Activated T-helper 1 cell treated with anti-CD3 and anti-CD28 coated beads, Interleukin-12 subunit alpha, Interleukin-12 subunit beta, Interleukin-2, Interleukin-4 antibody, amounts not matched to agents 30 ng/mL and 10 ng/mL and 1 ng/mL, durations not matched to agents 14 hours and 24 hours and 36 hours (primary cell): ENCODE measurements at regions of chr10 and their contacts with region 1.

Region 1: GRCh38 chr10:62804356-62805230 is at the start of gene ADO:
- DNase-seq: peak; percentile 68
- H3K4me3 Mint-ChIP-seq: peak within 1 kb of the TSS; percentile 90
- H3K27ac Mint-ChIP-seq: peak within 1 kb of the TSS; percentile 95
- H3K4me1 Mint-ChIP-seq: peaks cover 41% of the 10 kb centered on the region
- H3K27me3 Mint-ChIP-seq: peaks cover 11% of the 10 kb centered on the region
- total RNA-seq, gene ADO: 52.3 and 55.8 TPM in 2 replicates

Region 2: DNA sequence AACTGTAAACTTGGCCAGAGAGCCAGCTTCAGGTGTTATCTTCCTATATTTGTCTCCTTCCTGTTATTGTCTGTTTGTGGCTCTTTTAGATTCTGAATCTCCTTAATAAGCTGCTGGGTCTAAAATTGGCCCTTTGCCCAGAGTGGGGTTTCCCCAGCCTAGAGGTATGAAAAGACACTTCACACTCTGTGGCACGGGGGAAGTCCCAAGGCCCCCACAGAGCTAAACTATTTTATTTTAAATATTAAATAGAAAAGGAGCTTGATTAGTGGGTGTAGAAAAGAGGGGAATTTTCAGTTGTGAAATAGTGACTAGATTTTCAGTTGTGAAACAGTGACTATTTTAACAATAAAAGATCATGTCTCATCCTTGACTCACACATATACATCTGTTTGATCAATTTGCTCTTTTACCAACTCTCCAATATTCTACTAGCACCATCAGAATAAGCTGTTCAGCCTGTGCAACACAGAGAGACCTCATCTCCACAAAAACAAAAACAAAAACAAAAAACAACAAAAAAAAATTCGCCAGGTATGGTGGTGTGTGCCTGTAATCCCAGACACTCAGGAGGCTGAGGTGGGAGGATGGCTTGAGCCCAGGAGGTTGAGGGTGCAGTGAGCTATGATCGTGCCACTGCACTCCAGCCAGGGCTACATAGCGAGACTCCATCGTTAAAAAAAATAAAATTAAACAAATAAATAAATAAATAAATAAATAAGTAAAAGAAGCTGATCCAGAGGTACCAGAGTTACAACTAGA is 24.9 kb before region 1 on chr10:
- intact Hi-C with region 1: loop called (anchors 1 kb)
- DNase-seq: peak; percentile 48
- H3K4me3 Mint-ChIP-seq: peak overlapping the region; percentile 27
- H3K27ac Mint-ChIP-seq: peak overlapping the region; percentile 76
- H3K4me1 Mint-ChIP-seq: peaks cover 45% of the 10 kb centered on the region
- H3K27me3 Mint-ChIP-seq: peaks cover 19% of the 10 kb centered on the region

Region 3: GRCh38 chr10:63133056-63133820 is 328.6 kb after region 1 on chr10 and contains the start of gene NRBF2:
- intact Hi-C with region 1: loop called (anchors 1 kb)
- DNase-seq: peak; percentile 97
- H3K4me3 Mint-ChIP-seq: peak within 1 kb of the TSS; percentile 91
- H3K27ac Mint-ChIP-seq: peak within 1 kb of the TSS; percentile 83
- H3K4me1 Mint-ChIP-seq: peaks cover 32% of the 10 kb centered on the region
- H3K27me3 Mint-ChIP-seq: peaks cover 3% of the 10 kb centered on the region
- total RNA-seq, gene NRBF2: 30.0 and 30.8 TPM in 2 replicates